ENCODE measurements at regions of chr19 and their contacts with region 1.

Region 1: GRCh38 chr19:54159352-54160181 is at the start of gene LENG1:
- DNase-seq: peak; percentile 99 to 100 (median 100)
- H3K4me3 ChIP-seq: peak within 1 kb of the TSS; percentile 54 to 100 (median 84)
- H3K27ac ChIP-seq: peak within 1 kb of the TSS; percentile 88 to 100 (median 98)
- H3K27me3 ChIP-seq: peaks cover 0 to 4% (median 0%) of the 10 kb centered on the region in 45 donors
- CTCF ChIP-seq: peak; percentile 26 to 80 (median 64)
- total RNA-seq, gene LENG1: 4.0 to 8.9 (median 6.2) TPM

Region 2: GRCh38 chr19:53624762-53625540 is 534.6 kb before region 1 on chr19:
- intact Hi-C with region 1: no loop called
- DNase-seq: no peak
- H3K4me3 ChIP-seq: no peak overlapping the region
- H3K27ac ChIP-seq: no peak overlapping the region
- H3K27me3 ChIP-seq: no peaks in the 10 kb centered on the region
- CTCF ChIP-seq: no peak

Region 3: GRCh38 chr19:54115109-54116063 is 44.2 kb before region 1 on chr19 and contains the starts of genes PRPF31 and TFPT:
- intact Hi-C with region 1: loop called in 1 of 2 experiments (anchors 1 kb)
- DNase-seq: peak; percentile 93 to 98 (median 95)
- H3K4me3 ChIP-seq: peak within 1 kb of the TSS; percentile 66 to 100 (median 93)
- H3K27ac ChIP-seq: peak within 1 kb of the TSS; percentile 69 to 99 (median 95)
- H3K27me3 ChIP-seq: no peaks in the 10 kb centered on the region
- CTCF ChIP-seq: peak in 19 of 56 donors; percentile 5 to 52 (median 18)
- total RNA-seq, gene PRPF31: 38.2 to 60.7 (median 48.1) TPM
- total RNA-seq, gene TFPT: 30.8 to 72.2 (median 49.8) TPM

Region 4: DNA sequence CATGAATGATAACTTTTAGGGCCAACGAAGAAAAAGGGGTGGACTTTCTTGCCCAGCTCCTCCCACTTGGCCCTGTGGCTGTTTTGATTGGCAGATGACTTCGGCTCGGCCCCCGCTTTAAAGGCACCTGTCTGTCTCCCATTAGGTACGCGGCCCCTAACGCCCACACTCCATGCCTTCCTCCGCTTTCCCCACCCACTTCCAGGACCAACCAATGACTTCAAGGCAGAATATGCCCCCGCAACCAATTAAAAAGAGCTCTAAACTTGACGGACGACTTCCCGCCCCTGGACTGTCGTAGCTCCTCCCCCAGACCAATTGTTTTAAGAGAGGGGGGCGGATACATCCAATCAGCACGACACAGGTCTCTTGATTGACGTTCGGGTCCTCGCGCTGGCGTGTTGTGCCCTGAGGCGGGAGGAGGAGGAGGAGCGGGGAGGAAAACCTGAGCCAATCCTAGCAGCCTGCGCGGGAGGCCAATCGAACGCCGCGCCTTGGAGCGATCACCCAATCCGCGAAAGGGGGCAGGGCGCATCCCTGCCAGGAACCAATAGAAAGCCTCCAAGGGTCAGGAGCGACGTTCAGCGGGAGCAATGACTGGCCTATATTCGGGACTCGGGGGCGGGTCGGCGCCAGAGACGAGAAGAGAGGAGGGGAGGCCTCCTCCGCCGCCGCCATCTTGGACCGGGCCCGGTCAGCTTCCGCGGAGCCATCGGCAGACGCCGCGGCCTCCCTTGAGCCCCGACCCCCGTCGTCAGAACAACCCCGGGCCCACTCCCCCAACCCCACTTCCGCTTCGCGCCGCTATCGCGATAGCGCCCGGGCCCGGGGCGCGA is 22.3 kb before region 1 on chr19 and contains the start of gene CNOT3:
- intact Hi-C with region 1: loop called in 1 of 2 experiments (anchors 2 kb)
- DNase-seq: peak; percentile 95 to 100 (median 99)
- H3K4me3 ChIP-seq: peak within 1 kb of the TSS; percentile 60 to 100 (median 97)
- H3K27ac ChIP-seq: peak within 1 kb of the TSS in 57 of 59 donors; percentile 70 to 97 (median 92)
- H3K27me3 ChIP-seq: no peaks in the 10 kb centered on the region
- CTCF ChIP-seq: peak in 2 of 56 donors; percentile 10 to 15
- total RNA-seq, gene CNOT3: 29.1 to 60.7 (median 39.7) TPM

Region 5: DNA sequence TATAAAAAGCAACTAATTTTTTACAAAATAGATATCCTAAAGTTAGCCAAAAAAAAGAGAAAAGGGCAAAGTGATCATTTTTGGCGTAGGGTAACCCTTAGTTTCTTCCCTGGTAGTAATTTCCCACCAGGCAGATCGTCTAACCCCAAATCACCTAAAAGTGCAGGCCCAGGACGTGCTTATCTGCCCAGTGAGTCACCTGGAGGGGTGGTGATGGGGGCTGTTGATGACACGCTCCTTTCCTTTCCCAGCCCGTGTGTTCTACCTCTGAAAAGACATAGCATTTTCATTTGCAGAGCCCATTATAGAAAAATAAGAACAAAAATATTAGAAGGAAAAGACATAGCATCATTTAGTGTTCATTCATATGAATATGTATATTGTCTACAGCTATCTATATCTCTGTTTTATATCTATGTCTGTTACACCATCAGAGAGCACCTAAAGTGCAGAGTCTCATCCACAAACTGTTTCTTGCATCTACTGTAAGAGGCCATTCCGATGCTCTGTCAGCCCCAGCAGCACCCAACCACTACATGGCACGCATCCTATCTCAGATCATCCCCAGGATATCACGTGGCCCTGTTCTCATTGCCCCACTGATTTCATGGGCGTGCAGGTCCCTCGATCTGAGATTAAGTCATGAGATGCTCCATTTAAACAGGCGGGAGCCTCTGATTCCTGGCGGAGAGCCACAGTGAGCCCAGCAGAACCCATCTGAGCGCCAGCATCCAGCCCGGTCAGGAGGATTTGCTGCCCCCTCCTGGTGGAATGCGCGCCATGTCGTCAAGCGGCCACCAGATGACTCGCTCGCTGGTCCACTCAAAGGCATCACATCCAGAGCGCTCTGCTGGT is 71.7 kb after region 1 on chr19:
- intact Hi-C with region 1: loop called in 1 of 2 experiments (anchors 1 kb)
- DNase-seq: peak; percentile 85 to 93 (median 89)
- H3K4me3 ChIP-seq: peak overlapping the region in 36 of 59 donors; percentile 1 to 50 (median 24)
- H3K27ac ChIP-seq: peak overlapping the region in 9 of 59 donors; percentile 1 to 53 (median 32)
- H3K27me3 ChIP-seq: peaks cover 0 to 29% (median 0%) of the 10 kb centered on the region in 45 donors
- CTCF ChIP-seq: peak; percentile 77 to 100 (median 94)